ENCODE measurements at regions of chr15 and their contacts with region 1.

Region 1: GRCh38 chr15:48330855-48331795 is at the start of gene DUT:
- DNase-seq: peak; percentile 89
- ATAC-seq: peak; percentile 84
- H3K4me3 Mint-ChIP-seq: peak within 1 kb of the TSS; percentile 82
- H3K27ac Mint-ChIP-seq: peak within 1 kb of the TSS; percentile 95
- H3K4me1 Mint-ChIP-seq: peaks cover 28% of the 10 kb centered on the region
- H3K27me3 Mint-ChIP-seq: no peaks in the 10 kb centered on the region
- total RNA-seq, gene DUT: 371 to 500 TPM

Region 2: GRCh38 chr15:48177766-48178647 is 153.1 kb before region 1 on chr15 and contains the start of gene MYEF2:
- CTCF ChIA-PET with region 1: interaction called, 4 read pairs
- POLR2A ChIA-PET with region 1: no interaction called
- intact Hi-C with region 1: loop called in 1 of 2 experiments (anchors 1 kb)
- DNase-seq: peak; percentile 89
- ATAC-seq: peak; percentile 91
- H3K4me3 Mint-ChIP-seq: peak within 1 kb of the TSS; percentile 70
- H3K27ac Mint-ChIP-seq: peak within 1 kb of the TSS; percentile 86
- H3K4me1 Mint-ChIP-seq: peaks cover 21% of the 10 kb centered on the region
- H3K27me3 Mint-ChIP-seq: peaks cover 8% of the 10 kb centered on the region
- total RNA-seq, gene MYEF2: 23.8 to 27.7 TPM

Region 3: DNA sequence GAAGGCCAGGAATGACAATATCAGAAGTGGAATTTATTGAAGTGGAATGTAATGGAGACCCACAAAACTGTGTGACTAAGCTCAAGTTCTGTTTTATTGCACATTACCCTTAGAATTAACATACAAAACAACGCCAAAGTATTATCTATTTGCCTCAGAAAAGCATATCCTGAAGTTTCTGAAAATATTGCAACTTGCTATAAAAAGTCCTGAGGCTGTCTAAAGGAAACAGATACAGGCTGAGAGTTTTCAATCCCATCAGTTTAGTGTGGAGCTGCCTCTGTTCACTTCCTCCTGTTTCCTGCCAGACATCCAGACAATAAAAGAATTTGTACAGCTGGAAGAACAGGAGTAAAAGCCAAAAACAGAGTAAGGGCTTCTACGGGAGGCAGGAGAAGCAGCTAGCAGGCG is 205.6 kb after region 1 on chr15:
- CTCF ChIA-PET with region 1: no interaction called
- POLR2A ChIA-PET with region 1: no interaction called
- intact Hi-C with region 1: no loop called
- DNase-seq: no peak
- ATAC-seq: no peak
- H3K4me3 Mint-ChIP-seq: no peak overlapping the region
- H3K27ac Mint-ChIP-seq: no peak overlapping the region
- H3K4me1 Mint-ChIP-seq: no peaks in the 10 kb centered on the region
- H3K27me3 Mint-ChIP-seq: peaks cover 4% of the 10 kb centered on the region

Region 4: DNA sequence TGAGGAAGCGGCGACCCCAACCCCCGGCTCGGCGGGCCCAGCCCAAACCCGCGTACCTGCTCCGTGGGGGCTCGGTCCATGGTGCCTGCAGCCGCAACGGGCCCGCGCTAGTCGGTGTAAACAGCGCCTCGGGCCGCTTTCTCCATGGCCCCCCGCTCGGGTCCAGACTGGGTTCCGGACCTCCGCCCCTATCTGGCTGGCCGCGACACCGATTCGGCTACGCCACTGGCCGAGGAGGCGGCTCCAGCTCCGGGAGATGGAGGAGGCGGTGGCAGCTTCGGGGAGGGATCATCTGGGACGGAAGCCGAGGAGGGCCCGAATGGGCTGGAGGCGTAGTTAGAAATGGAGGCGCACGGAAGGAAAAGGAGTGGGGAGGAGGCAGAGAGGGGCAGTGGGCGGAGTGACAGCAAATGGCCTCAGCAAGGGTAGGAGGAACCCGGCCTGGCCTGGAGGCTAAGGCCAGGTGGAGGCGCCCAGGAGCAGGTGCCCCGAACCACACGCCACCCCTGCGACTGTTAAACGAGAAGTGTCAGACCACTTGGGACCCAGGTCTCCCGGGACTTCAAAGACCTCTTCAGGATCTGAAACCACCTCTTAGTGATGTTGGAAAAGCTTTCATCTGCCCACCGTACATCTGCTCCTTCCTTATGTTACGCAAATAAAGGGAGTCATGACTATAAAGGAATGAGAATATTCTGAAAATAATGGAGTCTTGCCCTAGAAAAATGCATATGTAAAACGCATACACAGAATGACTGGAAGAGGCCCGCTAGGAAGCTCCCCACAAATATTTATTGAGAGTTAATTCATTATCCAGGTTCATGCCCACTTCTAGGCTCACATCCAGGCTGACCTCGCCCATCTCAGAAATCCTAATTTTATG is 715.3 kb after region 1 on chr15 and contains the start of gene SECISBP2L:
- CTCF ChIA-PET with region 1: no interaction called
- POLR2A ChIA-PET with region 1: no interaction called
- intact Hi-C with region 1: loop called in 1 of 2 experiments (anchors 1 kb)
- DNase-seq: peak; percentile 95
- ATAC-seq: peak; percentile 97
- H3K4me3 Mint-ChIP-seq: peak within 1 kb of the TSS; percentile 92
- H3K27ac Mint-ChIP-seq: peak within 1 kb of the TSS; percentile 84
- H3K4me1 Mint-ChIP-seq: peaks cover 22% of the 10 kb centered on the region
- H3K27me3 Mint-ChIP-seq: no peaks in the 10 kb centered on the region
- total RNA-seq, gene SECISBP2L: 22.4 to 36.8 TPM